Heart left ventricle (tissue), 16 donors: ENCODE measurements at regions of chr17 and their contacts with region 1.

Region 1: DNA sequence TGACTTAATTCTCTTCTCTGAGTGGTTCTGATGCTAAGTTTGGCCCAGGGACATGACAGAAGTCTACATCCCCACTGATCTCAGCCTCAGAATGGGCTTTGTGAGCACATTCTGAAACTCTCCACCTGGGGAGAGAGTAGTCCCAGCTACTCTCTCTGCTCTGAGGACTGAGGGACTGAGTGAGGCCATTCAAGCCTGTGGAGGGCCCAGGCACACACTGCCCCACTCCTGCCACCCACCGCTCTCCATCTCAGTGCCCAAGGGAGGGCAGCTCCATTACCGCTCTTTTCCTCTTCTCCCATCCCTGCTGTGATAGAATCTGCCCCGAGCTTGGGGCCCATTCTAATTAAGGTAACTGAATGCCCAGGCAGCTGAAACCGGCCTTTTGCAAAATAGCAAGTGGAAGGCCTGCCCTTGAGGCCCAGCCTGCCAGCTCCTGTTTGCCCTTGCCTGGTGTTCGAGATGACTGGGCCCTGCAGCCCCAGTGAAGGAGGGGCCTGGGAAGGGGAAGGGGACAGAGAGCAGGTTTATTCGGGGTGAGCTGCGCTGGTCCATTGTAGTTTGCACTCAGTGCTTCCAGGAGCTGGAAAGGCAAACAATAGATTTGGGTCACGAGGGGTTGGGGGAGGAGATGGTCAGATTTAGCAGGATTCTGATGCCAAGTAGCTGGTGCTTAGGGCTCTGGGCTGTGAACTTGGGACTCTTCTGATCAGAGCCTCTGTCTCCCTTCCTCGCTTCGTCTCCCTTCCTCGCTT is 76.2 kb downstream of the RAB11FIP4 start:
- DNase-seq: peak in 4 of 5 donors; percentile 44 to 75 (median 56)
- ATAC-seq: peak; percentile 54 to 92 (median 70)
- H3K4me3 ChIP-seq: no peak overlapping the region
- H3K27ac ChIP-seq: peak overlapping the region in 11 of 12 donors; percentile 40 to 89 (median 73)
- H3K4me1 ChIP-seq: peaks cover 0 to 30% (median 10%) of the 10 kb centered on the region in 12 donors
- H3K27me3 ChIP-seq: no peaks in the 10 kb centered on the region
- CTCF ChIP-seq: no peak
- POLR2A ChIP-seq: no peak

Region 2: GRCh38 chr17:31517524-31517923 is 49.8 kb after region 1 on chr17:
- intact Hi-C with region 1: loop called in 1 of 10 experiments (anchors 10 kb)
- DNase-seq: no peak
- ATAC-seq: peak in 3 of 4 donors; percentile 46 to 63 (median 50)
- H3K4me3 ChIP-seq: no peak overlapping the region
- H3K27ac ChIP-seq: no peak overlapping the region
- H3K4me1 ChIP-seq: peaks cover 0 to 4% (median 0%) of the 10 kb centered on the region in 12 donors
- H3K27me3 ChIP-seq: no peaks in the 10 kb centered on the region
- CTCF ChIP-seq: peak in 8 of 12 donors; percentile 26 to 56 (median 36)
- POLR2A ChIP-seq: no peak